ENCODE measurements at regions of chr11 and their contacts with region 1.

Region 1: DNA sequence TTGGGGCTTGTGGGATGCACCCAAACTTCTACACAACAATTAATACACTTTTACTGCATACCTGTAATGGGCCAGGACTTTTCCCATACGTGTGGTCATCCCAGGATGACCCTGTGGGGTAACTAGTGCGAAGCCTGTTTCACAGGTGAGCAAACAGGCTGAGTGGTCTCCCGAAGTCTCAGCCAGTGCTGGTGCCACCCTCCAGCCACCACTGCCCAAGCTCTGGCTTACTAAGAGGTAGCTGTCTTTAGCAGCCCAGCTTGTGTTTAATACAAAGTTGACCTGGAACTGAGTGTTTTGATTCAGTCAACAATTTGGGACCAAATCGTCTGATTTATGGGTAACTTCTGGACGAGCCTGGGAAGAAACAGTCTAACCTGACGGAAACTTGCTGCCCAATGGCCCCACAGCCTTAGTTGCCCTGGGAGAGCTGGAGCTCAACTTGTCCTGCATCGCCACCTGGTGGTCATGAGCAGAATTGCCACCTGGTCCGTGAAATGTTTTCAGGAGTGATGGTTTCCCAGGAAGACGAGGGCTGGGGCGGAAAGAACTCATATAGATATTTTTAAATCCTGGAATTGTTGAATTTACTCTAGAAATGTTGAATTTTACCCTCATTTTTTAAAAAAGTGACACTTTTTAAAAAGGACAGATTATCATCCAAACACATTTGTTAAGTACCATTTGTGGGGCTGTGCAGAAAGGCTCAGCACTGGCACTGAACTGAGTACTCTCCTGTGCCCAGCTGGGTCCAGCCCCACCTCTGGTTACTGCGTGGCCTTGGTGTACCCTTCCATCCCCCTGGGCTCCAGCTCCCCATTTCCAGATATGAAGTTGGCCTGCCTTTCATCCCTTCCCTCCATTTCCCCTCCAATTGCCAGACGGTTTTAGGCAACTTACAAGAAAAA is 95.5 kb upstream of the PARVA start:
- DNase-seq: peak; percentile 60
- H3K4me3 Mint-ChIP-seq: no peak overlapping the region
- H3K27ac Mint-ChIP-seq: peak overlapping the region; percentile 74
- H3K4me1 Mint-ChIP-seq: peaks cover 20% of the 10 kb centered on the region
- H3K27me3 Mint-ChIP-seq: no peaks in the 10 kb centered on the region

Region 2: GRCh38 chr11:11931461-11932055 is 350.3 kb before region 1 on chr11:
- intact Hi-C with region 1: loop called (anchors 10 kb)
- DNase-seq: no peak
- H3K4me3 Mint-ChIP-seq: no peak overlapping the region
- H3K27ac Mint-ChIP-seq: no peak overlapping the region
- H3K4me1 Mint-ChIP-seq: peaks cover 6% of the 10 kb centered on the region
- H3K27me3 Mint-ChIP-seq: no peaks in the 10 kb centered on the region

Region 3: DNA sequence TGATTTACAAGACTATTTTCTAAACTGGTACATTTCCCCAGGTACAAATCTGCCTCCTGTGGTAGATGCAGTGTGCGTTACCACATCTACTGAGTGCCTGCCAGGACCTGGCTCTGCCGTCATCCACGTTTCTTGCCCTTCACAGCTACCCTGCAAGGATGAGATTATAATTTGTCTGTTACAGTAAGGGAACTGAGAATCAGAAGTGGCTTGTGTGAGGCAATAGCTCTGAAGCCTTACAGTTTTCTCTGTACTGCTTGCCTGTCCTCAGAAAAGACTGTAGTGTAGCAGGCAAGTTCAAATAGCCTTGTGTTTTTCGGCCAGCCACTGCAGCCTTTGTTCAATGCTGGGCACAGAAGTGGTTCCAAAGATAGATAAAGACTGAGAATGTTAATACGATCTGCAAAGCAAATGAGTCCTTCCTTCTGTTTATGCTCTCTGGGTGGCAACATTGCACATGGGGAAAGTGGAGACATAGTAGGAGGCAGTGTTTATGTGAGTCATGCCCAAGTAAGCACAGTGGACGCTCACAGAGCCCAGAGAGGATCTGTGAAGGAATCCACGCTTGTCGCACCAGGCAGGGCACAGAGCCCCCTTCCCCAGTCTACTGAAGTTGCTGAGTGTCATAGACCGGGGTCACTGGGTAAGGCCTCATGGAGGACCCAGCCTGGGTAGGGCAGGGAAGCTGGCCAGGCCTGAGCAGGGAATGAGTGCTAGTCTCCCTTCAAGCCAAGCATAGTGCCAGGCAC is 122.3 kb before region 1 on chr11:
- intact Hi-C with region 1: loop called (anchors 5 kb)
- DNase-seq: no peak
- H3K4me3 Mint-ChIP-seq: peak overlapping the region; percentile 18
- H3K27ac Mint-ChIP-seq: peak overlapping the region; percentile 82
- H3K4me1 Mint-ChIP-seq: peaks cover 88% of the 10 kb centered on the region
- H3K27me3 Mint-ChIP-seq: no peaks in the 10 kb centered on the region